Uterus (tissue), 4 donors: ENCODE measurements at regions of chr10 and their contacts with region 1.

Region 1: GRCh38 chr10:29386342-29386999 is 97.6 kb downstream of the LYZL1 start:
- DNase-seq: no peak
- H3K4me3 ChIP-seq: no peak overlapping the region
- H3K27ac ChIP-seq: no peak overlapping the region
- H3K4me1 ChIP-seq: no peaks in the 10 kb centered on the region
- H3K27me3 ChIP-seq: no peaks in the 10 kb centered on the region
- CTCF ChIP-seq: peak; percentile 60 to 78 (median 70)
- POLR2A ChIP-seq: no peak

Region 2: GRCh38 chr10:29455095-29455494 is 68.6 kb after region 1 on chr10:
- intact Hi-C with region 1: loop called (anchors 10 kb)
- DNase-seq: no peak
- H3K4me3 ChIP-seq: no peak overlapping the region
- H3K27ac ChIP-seq: no peak overlapping the region
- H3K4me1 ChIP-seq: no peaks in the 10 kb centered on the region
- H3K27me3 ChIP-seq: no peaks in the 10 kb centered on the region
- CTCF ChIP-seq: no peak
- POLR2A ChIP-seq: no peak

Region 3: GRCh38 chr10:29746080-29746797 is 359.8 kb after region 1 on chr10:
- intact Hi-C with region 1: no loop called
- DNase-seq: no peak
- H3K4me3 ChIP-seq: no peak overlapping the region
- H3K27ac ChIP-seq: peak overlapping the region; percentile 25 to 40
- H3K4me1 ChIP-seq: peaks cover 0 to 6% of the 10 kb centered on the region in 2 donors
- H3K27me3 ChIP-seq: no peaks in the 10 kb centered on the region
- CTCF ChIP-seq: no peak
- POLR2A ChIP-seq: no peak